ENCODE measurements at regions of chr12 and their contacts with region 1.

Region 1: GRCh38 chr12:42097971-42098370 is 46.7 kb downstream of the GXYLT1 start:
- DNase-seq: peak in 20 of 35 experiments; percentile 5 to 77 (median 22)
- ATAC-seq: peak; percentile 74 to 93 (median 86)
- H3K4me3 ChIP-seq: peak overlapping the region; percentile 32 to 42
- H3K4me3 Mint-ChIP-seq: peak overlapping the region; percentile 76 to 90 (median 85)
- H3K27ac ChIP-seq: peak overlapping the region; percentile 94
- H3K27ac Mint-ChIP-seq: peak overlapping the region; percentile 92 to 99
- H3K4me1 ChIP-seq: peaks cover 10 to 30% of the 10 kb centered on the region in 2 experiments
- H3K4me1 Mint-ChIP-seq: peaks cover 42 to 50% (median 47%) of the 10 kb centered on the region in 3 donors
- H3K27me3 ChIP-seq: no peaks in the 10 kb centered on the region
- H3K27me3 Mint-ChIP-seq: no peaks in the 10 kb centered on the region

Region 2: DNA sequence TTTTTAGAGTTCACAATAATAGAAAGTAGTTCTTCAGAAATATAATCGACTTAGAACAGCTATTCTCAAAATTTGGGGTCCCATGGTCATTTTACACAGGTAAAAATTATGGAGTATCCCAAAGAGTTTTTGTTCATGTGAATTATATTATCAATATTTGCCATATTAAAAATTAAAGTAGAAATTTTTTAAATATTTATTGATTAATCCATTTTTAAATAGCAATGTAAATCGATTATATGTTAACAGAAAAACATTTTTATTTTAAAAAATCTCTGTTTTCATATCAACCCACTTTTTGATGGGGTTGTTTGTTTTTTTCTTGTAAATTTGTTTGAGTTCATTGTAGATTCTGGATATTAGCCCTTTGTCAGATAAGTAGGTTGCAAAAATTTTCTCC is 276.4 kb before region 1 on chr12:
- CTCF ChIA-PET with region 1: no interaction called
- POLR2A ChIA-PET with region 1: no interaction called
- DNase-seq: no peak
- ATAC-seq: no peak
- H3K4me3 ChIP-seq: no peak overlapping the region
- H3K4me3 Mint-ChIP-seq: no peak overlapping the region
- H3K27ac ChIP-seq: no peak overlapping the region
- H3K27ac Mint-ChIP-seq: no peak overlapping the region
- H3K4me1 ChIP-seq: no peaks in the 10 kb centered on the region
- H3K4me1 Mint-ChIP-seq: no peaks in the 10 kb centered on the region
- H3K27me3 ChIP-seq: no peaks in the 10 kb centered on the region
- H3K27me3 Mint-ChIP-seq: no peaks in the 10 kb centered on the region

Region 3: GRCh38 chr12:42070036-42070435 is 27.9 kb before region 1 on chr12:
- CTCF ChIA-PET with region 1: no interaction called
- POLR2A ChIA-PET with region 1: no interaction called
- DNase-seq: no peak
- ATAC-seq: no peak
- H3K4me3 ChIP-seq: no peak overlapping the region
- H3K4me3 Mint-ChIP-seq: no peak overlapping the region
- H3K27ac ChIP-seq: no peak overlapping the region
- H3K27ac Mint-ChIP-seq: no peak overlapping the region
- H3K4me1 ChIP-seq: no peaks in the 10 kb centered on the region
- H3K4me1 Mint-ChIP-seq: no peaks in the 10 kb centered on the region
- H3K27me3 ChIP-seq: no peaks in the 10 kb centered on the region
- H3K27me3 Mint-ChIP-seq: peaks cover 2 to 3% of the 10 kb centered on the region in 2 donors

Region 4: GRCh38 chr12:42172441-42173210 is 74.7 kb after region 1 on chr12:
- CTCF ChIA-PET with region 1: interaction called in 1 of 2 experiments, 10 read pairs
- POLR2A ChIA-PET with region 1: no interaction called
- DNase-seq: no peak
- ATAC-seq: no peak
- H3K4me3 ChIP-seq: no peak overlapping the region
- H3K4me3 Mint-ChIP-seq: no peak overlapping the region
- H3K27ac ChIP-seq: no peak overlapping the region
- H3K27ac Mint-ChIP-seq: no peak overlapping the region
- H3K4me1 ChIP-seq: no peaks in the 10 kb centered on the region
- H3K4me1 Mint-ChIP-seq: peaks cover 17 to 26% (median 21%) of the 10 kb centered on the region in 3 donors
- H3K27me3 ChIP-seq: no peaks in the 10 kb centered on the region
- H3K27me3 Mint-ChIP-seq: no peaks in the 10 kb centered on the region

Region 5: GRCh38 chr12:42402821-42403411 is 304.9 kb after region 1 on chr12:
- CTCF ChIA-PET with region 1: no interaction called
- POLR2A ChIA-PET with region 1: interaction called in 1 of 2 experiments, 10 read pairs
- DNase-seq: no peak
- ATAC-seq: no peak
- H3K4me3 ChIP-seq: no peak overlapping the region
- H3K4me3 Mint-ChIP-seq: no peak overlapping the region
- H3K27ac ChIP-seq: no peak overlapping the region
- H3K27ac Mint-ChIP-seq: peak overlapping the region in 1 of 2 donors; percentile 48
- H3K4me1 ChIP-seq: no peaks in the 10 kb centered on the region
- H3K4me1 Mint-ChIP-seq: peaks cover 0 to 10% (median 4%) of the 10 kb centered on the region in 3 donors
- H3K27me3 ChIP-seq: no peaks in the 10 kb centered on the region
- H3K27me3 Mint-ChIP-seq: no peaks in the 10 kb centered on the region

Measured in T-cell (primary cell).